Dendritic cell treated with granulocyte-macrophage colony-stimulating factor and Interleukin-4, amounts not matched to agents 40 ng/mL and 50 ng/mL, for 4 days (primary cell): ENCODE measurements at regions of chr1 and their contacts with region 1.

Region 1: DNA sequence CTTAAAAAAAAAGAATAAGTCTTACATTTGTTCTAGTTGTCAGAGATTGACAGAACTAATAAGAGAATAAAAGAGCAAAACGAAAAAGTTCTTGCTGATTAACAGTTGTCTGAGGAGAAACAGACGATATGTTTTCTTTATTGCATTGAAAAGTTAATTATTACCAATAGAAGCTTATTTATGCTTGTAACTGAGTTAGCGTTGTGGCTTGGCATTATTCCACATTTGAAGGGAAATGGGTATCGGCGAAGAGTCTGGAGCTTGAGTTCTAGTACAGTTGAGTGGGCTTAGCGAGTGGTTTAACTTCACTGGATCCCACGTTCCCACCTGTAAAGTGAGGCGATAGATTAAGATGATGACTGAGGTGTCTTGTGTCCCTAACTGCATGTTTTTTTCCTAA is 109.0 kb downstream of the SDCCAG8 start:
- H3K4me3 Mint-ChIP-seq: no peak overlapping the region
- H3K27ac Mint-ChIP-seq: no peak overlapping the region
- H3K4me1 Mint-ChIP-seq: no peaks in the 10 kb centered on the region
- H3K27me3 Mint-ChIP-seq: no peaks in the 10 kb centered on the region

Region 2: GRCh38 chr1:243294723-243295121 is 70.1 kb before region 1 on chr1:
- intact Hi-C with region 1: no loop called
- H3K4me3 Mint-ChIP-seq: no peak overlapping the region
- H3K27ac Mint-ChIP-seq: peak overlapping the region; percentile 24
- H3K4me1 Mint-ChIP-seq: peaks cover 25% of the 10 kb centered on the region
- H3K27me3 Mint-ChIP-seq: no peaks in the 10 kb centered on the region

Region 3: GRCh38 chr1:243311809-243312208 is 53.1 kb before region 1 on chr1:
- intact Hi-C with region 1: no loop called
- H3K4me3 Mint-ChIP-seq: no peak overlapping the region
- H3K27ac Mint-ChIP-seq: peak overlapping the region; percentile 86
- H3K4me1 Mint-ChIP-seq: peaks cover 46% of the 10 kb centered on the region
- H3K27me3 Mint-ChIP-seq: no peaks in the 10 kb centered on the region

Region 4: GRCh38 chr1:243672539-243673074 is 307.7 kb after region 1 on chr1:
- intact Hi-C with region 1: loop called (anchors 10 kb)
- H3K4me3 Mint-ChIP-seq: no peak overlapping the region
- H3K27ac Mint-ChIP-seq: no peak overlapping the region
- H3K4me1 Mint-ChIP-seq: peaks cover 4% of the 10 kb centered on the region
- H3K27me3 Mint-ChIP-seq: no peaks in the 10 kb centered on the region